WTC11 (cell line): ENCODE measurements at regions of chr10 and their contacts with region 1.

Region 1: DNA sequence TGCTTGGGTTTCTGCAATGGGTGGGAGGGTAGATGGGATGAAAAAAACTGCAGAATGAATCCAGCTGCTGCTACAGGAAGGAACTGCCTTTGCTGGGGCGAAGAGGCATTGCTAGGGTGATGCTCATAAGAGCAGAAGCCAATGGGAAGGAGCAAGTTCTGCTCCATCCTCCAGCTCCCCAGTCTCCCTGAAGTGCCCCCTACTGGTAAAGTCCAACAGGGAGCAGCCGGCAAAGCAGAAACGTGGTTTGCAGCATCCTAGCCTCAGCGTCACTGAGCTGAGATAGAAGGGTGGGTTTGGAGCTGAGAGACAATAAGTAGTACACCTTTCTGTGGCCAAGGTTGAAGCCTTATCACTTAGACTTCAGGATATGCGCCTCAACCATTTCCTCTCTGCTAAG is 220.5 kb downstream of the CCSER2 start:
- DNase-seq: peak; percentile 66
- ATAC-seq: peak; percentile 90
- H3K4me3 Mint-ChIP-seq: no peak overlapping the region
- H3K27ac Mint-ChIP-seq: no peak overlapping the region
- H3K4me1 Mint-ChIP-seq: no peaks in the 10 kb centered on the region
- H3K27me3 Mint-ChIP-seq: no peaks in the 10 kb centered on the region; the same call in 1 of the 2 replicates
- CTCF ChIP-seq: peak; percentile 44

Region 2: GRCh38 chr10:84256510-84257342 is 292.1 kb before region 1 on chr10:
- CTCF ChIA-PET with region 1: interaction called, 11 read pairs
- POLR2A ChIA-PET with region 1: no interaction called
- DNase-seq: peak; percentile 84
- ATAC-seq: peak; percentile 95
- H3K4me3 Mint-ChIP-seq: no peak overlapping the region
- H3K27ac Mint-ChIP-seq: no peak overlapping the region
- H3K4me1 Mint-ChIP-seq: 0 out of 2 replicates have a peak, but pooled peaks cover 3% of the 10 kb centered on the region
- H3K27me3 Mint-ChIP-seq: peaks cover 17% of the 10 kb centered on the region
- CTCF ChIP-seq: peak; percentile 76

Region 3: GRCh38 chr10:84511106-84511505 is 37.8 kb before region 1 on chr10:
- CTCF ChIA-PET with region 1: no interaction called
- POLR2A ChIA-PET with region 1: no interaction called
- DNase-seq: no peak
- ATAC-seq: no peak
- H3K4me3 Mint-ChIP-seq: no peak overlapping the region
- H3K27ac Mint-ChIP-seq: no peak overlapping the region
- H3K4me1 Mint-ChIP-seq: peaks cover 16% of the 10 kb centered on the region
- H3K27me3 Mint-ChIP-seq: no peaks in the 10 kb centered on the region
- CTCF ChIP-seq: no peak

Region 4: DNA sequence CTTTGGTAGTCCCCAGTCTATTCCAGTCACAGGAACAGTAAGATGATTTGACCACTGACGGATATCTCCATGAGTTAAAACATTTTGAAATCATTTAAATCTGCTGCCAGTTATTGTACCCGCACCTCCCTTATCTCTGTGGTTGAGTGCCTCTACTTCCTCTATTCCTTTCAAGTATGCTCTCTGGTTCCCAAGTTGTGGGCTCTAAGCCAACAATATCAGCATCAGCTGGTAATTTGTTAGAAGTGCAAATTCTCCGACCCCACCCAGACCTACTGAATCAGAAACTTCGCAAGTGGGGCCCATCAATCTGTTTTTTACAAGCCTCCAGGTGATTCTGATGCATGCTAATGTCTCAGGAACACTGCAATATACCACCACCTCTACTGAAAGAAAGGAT is 15.0 kb after region 1 on chr10:
- CTCF ChIA-PET with region 1: interaction called, 19 read pairs
- POLR2A ChIA-PET with region 1: no interaction called
- DNase-seq: no peak
- ATAC-seq: no peak
- H3K4me3 Mint-ChIP-seq: no peak overlapping the region
- H3K27ac Mint-ChIP-seq: no peak overlapping the region
- H3K4me1 Mint-ChIP-seq: peaks cover 32% of the 10 kb centered on the region
- H3K27me3 Mint-ChIP-seq: no peaks in the 10 kb centered on the region; the same call in 1 of the 2 replicates
- CTCF ChIP-seq: no peak

Region 5: GRCh38 chr10:84574102-84574501 is 25.2 kb after region 1 on chr10:
- CTCF ChIA-PET with region 1: interaction called, 11 read pairs
- POLR2A ChIA-PET with region 1: no interaction called
- DNase-seq: no peak
- ATAC-seq: peak; percentile 98
- H3K4me3 Mint-ChIP-seq: no peak overlapping the region
- H3K27ac Mint-ChIP-seq: no peak overlapping the region
- H3K4me1 Mint-ChIP-seq: peaks cover 1% of the 10 kb centered on the region; the same call in 1 of the 2 replicates
- H3K27me3 Mint-ChIP-seq: no peaks in the 10 kb centered on the region
- CTCF ChIP-seq: no peak

Region 6: GRCh38 chr10:84599254-84599653 is 50.4 kb after region 1 on chr10:
- CTCF ChIA-PET with region 1: interaction called, 13 read pairs
- POLR2A ChIA-PET with region 1: interaction called, 6 read pairs
- DNase-seq: no peak
- ATAC-seq: peak; percentile 36; the same call in 1 of the 2 replicates
- H3K4me3 Mint-ChIP-seq: no peak overlapping the region
- H3K27ac Mint-ChIP-seq: no peak overlapping the region
- H3K4me1 Mint-ChIP-seq: peaks cover 6% of the 10 kb centered on the region
- H3K27me3 Mint-ChIP-seq: no peaks in the 10 kb centered on the region
- CTCF ChIP-seq: no peak

Region 7: GRCh38 chr10:84608126-84608525 is 59.3 kb after region 1 on chr10:
- CTCF ChIA-PET with region 1: interaction called, 48 read pairs
- POLR2A ChIA-PET with region 1: no interaction called
- DNase-seq: no peak
- ATAC-seq: no peak
- H3K4me3 Mint-ChIP-seq: no peak overlapping the region
- H3K27ac Mint-ChIP-seq: no peak overlapping the region
- H3K4me1 Mint-ChIP-seq: peaks cover 21% of the 10 kb centered on the region
- H3K27me3 Mint-ChIP-seq: no peaks in the 10 kb centered on the region; the same call in 1 of the 2 replicates
- CTCF ChIP-seq: no peak